ENCODE measurements at regions of chr14 and their contacts with region 1.

Region 1: GRCh38 chr14:22955702-22956569 is 954 bp downstream of the HAUS4 start:
- DNase-seq: no peak
- ATAC-seq: no peak
- H3K4me3 Mint-ChIP-seq: peak overlapping the region; percentile 90
- H3K27ac Mint-ChIP-seq: peak overlapping the region; percentile 86
- H3K4me1 Mint-ChIP-seq: peaks cover 13% of the 10 kb centered on the region
- H3K27me3 Mint-ChIP-seq: no peaks in the 10 kb centered on the region
- CTCF ChIP-seq: no peak

Region 2: DNA sequence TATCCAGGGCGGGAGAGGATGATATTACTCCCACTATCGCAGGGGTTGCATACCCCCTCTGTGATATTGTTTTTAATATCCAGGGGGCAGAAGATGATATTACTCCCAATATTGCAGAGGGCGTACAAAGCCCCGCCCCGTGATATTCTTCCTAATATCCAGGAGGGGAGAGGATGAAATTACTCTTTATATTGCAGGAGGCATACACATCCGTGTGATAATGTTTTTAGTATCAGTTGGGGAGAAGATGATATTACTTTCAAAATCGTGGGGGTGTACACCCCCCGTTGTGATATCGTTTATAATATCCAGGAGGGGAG is 242.3 kb before region 1 on chr14:
- CTCF ChIA-PET with region 1: no interaction called
- POLR2A ChIA-PET with region 1: no interaction called
- intact Hi-C with region 1: no loop called
- DNase-seq: no peak
- ATAC-seq: no peak
- H3K4me3 Mint-ChIP-seq: peak overlapping the region; percentile 88
- H3K27ac Mint-ChIP-seq: peak overlapping the region; percentile 78
- H3K4me1 Mint-ChIP-seq: peaks cover 13% of the 10 kb centered on the region
- H3K27me3 Mint-ChIP-seq: peaks cover 29% of the 10 kb centered on the region
- CTCF ChIP-seq: no peak

Region 3: DNA sequence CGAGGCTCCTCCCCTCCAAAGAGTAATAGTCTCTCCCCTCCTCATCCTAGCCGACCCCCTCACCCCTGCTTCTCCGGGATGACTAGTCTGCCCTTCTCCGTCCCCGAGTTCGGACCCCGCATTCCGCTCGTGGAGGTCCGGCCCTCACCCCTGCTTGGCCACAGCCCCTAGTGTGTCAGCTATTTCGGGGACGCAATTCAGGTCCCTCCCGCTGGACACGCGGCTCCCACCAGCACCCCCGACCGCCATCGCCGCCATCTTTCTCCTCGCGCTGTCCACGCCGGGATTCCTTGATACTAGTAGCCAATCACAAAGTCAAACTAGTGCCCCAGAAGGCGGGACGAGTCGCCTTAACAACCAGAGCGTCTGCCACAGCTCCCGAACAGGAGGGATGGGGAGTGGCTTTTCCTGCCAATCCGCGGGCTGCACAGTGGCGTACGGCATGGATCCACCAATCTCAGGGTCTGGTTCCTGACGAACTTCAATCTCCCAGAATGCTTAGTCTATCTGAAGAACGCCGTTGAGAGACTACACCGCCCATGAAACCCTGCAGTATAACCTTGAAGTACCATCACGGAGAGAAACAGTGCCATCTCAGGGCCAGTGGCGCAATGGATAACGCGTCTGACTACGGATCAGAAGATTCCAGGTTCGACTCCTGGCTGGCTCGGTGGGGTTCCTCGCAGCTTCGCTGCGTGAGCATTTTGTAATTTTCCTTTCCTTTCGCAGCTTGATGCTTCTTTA is 26.7 kb before region 1 on chr14 and contains the start of gene PRMT5:
- CTCF ChIA-PET with region 1: interaction called, 12 read pairs
- POLR2A ChIA-PET with region 1: interaction called, 30 read pairs
- intact Hi-C with region 1: loop called (anchors 1 kb)
- DNase-seq: peak; percentile 83
- ATAC-seq: peak; percentile 93
- H3K4me3 Mint-ChIP-seq: no peak within 1 kb of the TSS
- H3K27ac Mint-ChIP-seq: no peak within 1 kb of the TSS
- H3K4me1 Mint-ChIP-seq: peaks cover 14% of the 10 kb centered on the region
- H3K27me3 Mint-ChIP-seq: no peaks in the 10 kb centered on the region
- CTCF ChIP-seq: no peak
- total RNA-seq, gene PRMT5: 75.3 and 96.5 TPM in 2 replicates

Region 4: DNA sequence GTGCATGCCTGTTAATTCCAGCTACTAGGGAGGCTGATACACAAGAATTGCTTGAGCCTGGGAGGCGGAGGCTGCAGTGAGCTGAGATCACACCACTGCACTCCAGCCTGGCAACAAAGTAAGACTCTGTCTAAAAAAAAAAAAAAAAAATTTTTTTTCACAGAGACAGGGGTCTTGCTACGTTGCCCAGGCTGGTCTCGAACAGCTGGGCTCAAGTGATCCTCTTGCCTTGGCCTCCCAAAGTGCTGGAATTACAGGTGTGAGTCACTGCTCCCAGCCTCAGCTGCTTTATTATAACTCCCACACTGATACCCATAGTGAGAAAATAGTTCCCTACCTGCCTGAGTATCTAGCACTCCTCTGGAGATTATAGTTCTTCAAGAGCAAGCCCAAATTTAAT is 10.3 kb before region 1 on chr14:
- CTCF ChIA-PET with region 1: interaction called, 3 read pairs
- POLR2A ChIA-PET with region 1: interaction called, 19 read pairs
- intact Hi-C with region 1: no loop called
- DNase-seq: no peak
- ATAC-seq: no peak
- H3K4me3 Mint-ChIP-seq: no peak overlapping the region
- H3K27ac Mint-ChIP-seq: no peak overlapping the region
- H3K4me1 Mint-ChIP-seq: no peaks in the 10 kb centered on the region
- H3K27me3 Mint-ChIP-seq: no peaks in the 10 kb centered on the region
- CTCF ChIP-seq: no peak

Region 5: DNA sequence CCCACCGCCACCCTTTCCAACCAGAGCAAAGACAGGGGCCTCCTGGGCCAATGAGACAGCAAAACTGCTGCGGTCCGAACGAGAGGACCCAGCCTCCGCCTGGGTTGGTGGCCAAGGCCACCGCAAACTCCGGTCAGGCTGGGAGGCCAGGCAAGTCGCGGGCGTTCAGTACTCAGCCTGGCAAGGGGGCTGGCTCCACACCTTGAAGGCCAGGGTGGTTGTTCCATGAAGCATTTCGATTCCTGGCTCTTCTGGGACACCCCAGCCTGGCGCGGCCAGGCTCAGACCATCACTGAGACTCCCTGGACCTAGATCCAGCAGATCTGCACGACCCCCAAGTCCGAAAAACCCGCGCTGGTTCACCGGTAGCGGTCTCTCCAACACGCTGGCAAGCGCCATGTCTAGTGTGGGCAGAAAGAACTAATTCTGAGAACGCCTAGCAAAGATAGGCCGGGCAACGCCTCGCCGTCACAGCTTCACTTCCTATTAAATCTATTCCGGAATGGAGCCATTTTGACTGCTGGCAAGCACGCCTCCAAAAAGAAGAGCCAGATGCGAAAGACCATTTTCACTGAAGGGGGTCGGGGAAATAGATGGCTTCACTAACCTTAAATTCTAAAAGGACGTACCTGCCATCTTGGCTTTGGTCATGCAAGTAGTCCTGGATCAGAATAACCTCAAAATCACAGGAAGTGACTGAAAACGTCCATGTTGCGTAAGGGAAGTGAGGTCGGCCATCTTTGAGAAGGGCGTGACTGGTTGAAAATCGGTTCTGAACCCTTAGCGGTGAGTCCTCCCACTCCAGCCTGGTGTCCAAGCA is 78.8 kb after region 1 on chr14 and contains the start of gene PSMB5:
- CTCF ChIA-PET with region 1: no interaction called
- POLR2A ChIA-PET with region 1: no interaction called
- intact Hi-C with region 1: loop called (anchors 2 kb)
- DNase-seq: peak; percentile 67
- ATAC-seq: peak; percentile 93
- H3K4me3 Mint-ChIP-seq: peak within 1 kb of the TSS; percentile 84
- H3K27ac Mint-ChIP-seq: peak within 1 kb of the TSS; percentile 96
- H3K4me1 Mint-ChIP-seq: peaks cover 29% of the 10 kb centered on the region
- H3K27me3 Mint-ChIP-seq: no peaks in the 10 kb centered on the region
- CTCF ChIP-seq: no peak
- total RNA-seq, gene PSMB5: 53.3 and 67.5 TPM in 2 replicates